Mammary epithelial cell (primary cell): ENCODE measurements at regions of chrX and their contacts with region 1.

Region 1: GRCh38 chrX:131710431-131711045 is 166.7 kb downstream of the OR13H1 start:
- DNase-seq: no peak
- H3K4me3 ChIP-seq: no peak overlapping the region
- H3K27ac ChIP-seq: no peak overlapping the region
- H3K4me1 ChIP-seq: no peaks in the 10 kb centered on the region
- H3K27me3 ChIP-seq: no peaks in the 10 kb centered on the region
- CTCF ChIP-seq: no peak

Region 2: GRCh38 chrX:130179579-130180215 is 1530.8 kb before region 1 on chrX:
- CTCF ChIA-PET with region 1: no interaction called
- dilution Hi-C with region 1: no loop called
- in situ Hi-C with region 1: no loop called
- intact Hi-C with region 1: no loop called
- DNase-seq: no peak
- H3K4me3 ChIP-seq: no peak overlapping the region
- H3K27ac ChIP-seq: no peak overlapping the region
- H3K4me1 ChIP-seq: no peaks in the 10 kb centered on the region
- H3K27me3 ChIP-seq: no peaks in the 10 kb centered on the region
- CTCF ChIP-seq: no peak

Region 3: DNA sequence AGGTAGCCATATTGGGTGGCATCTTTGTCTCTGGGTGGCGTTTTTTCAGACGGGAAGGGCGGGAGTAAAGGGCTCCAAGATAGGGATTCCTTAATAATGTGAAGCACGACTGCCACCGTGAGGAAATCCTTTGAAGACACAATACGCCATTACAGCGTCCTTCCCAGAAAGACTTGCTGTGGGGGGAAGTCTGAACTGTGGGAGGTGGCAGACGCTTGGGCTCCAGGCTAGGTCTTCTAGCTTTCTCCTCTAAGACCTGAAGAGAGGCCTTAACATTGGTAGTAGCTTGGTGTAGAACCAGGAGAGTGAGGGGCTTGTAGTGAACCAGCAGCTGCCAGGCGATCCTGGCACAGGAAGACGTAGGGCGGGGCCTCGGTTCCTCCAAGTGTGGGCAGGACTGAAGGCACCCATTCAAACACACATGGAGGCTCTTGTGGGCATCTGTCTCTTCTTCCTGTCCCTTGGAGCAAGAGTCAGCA is 30.6 kb after region 1 on chrX:
- CTCF ChIA-PET with region 1: no interaction called
- dilution Hi-C with region 1: no loop called
- in situ Hi-C with region 1: no loop called
- intact Hi-C with region 1: loop called (anchors 1 kb)
- DNase-seq: peak; percentile 79
- H3K4me3 ChIP-seq: no peak overlapping the region
- H3K27ac ChIP-seq: no peak overlapping the region
- H3K4me1 ChIP-seq: no peaks in the 10 kb centered on the region
- H3K27me3 ChIP-seq: no peaks in the 10 kb centered on the region
- CTCF ChIP-seq: no peak

Region 4: DNA sequence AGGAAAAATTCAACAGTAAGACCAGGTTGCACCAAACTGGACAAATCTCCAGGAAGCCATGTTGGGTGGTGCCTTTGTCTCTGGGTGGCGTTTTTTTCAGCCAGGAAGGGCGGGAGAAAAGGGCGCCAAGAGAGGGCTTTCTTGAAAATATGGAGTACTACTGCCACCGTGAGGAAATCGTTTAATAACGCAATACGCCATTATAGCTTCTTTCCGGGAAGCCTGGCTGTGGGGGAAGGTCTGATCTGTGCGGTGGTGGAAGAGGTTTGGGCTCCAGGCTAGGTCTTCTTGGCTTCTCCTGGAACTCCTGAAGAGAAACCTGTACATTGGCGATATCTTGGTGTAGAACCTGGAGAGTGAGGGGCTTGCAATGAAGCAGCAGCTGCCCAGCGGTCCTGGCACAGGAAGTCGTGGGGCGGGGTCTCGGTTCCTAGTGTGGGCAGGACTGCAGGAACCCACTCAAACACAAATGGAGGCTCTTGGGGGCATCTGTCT is 36.0 kb after region 1 on chrX:
- CTCF ChIA-PET with region 1: no interaction called
- dilution Hi-C with region 1: no loop called
- in situ Hi-C with region 1: no loop called
- intact Hi-C with region 1: loop called (anchors 1 kb)
- DNase-seq: peak; percentile 79
- H3K4me3 ChIP-seq: peak overlapping the region; percentile 54 to 66 (median 57)
- H3K27ac ChIP-seq: peak overlapping the region; percentile 57
- H3K4me1 ChIP-seq: no peaks in the 10 kb centered on the region
- H3K27me3 ChIP-seq: no peaks in the 10 kb centered on the region
- CTCF ChIP-seq: peak; percentile 22 to 45

Region 5: DNA sequence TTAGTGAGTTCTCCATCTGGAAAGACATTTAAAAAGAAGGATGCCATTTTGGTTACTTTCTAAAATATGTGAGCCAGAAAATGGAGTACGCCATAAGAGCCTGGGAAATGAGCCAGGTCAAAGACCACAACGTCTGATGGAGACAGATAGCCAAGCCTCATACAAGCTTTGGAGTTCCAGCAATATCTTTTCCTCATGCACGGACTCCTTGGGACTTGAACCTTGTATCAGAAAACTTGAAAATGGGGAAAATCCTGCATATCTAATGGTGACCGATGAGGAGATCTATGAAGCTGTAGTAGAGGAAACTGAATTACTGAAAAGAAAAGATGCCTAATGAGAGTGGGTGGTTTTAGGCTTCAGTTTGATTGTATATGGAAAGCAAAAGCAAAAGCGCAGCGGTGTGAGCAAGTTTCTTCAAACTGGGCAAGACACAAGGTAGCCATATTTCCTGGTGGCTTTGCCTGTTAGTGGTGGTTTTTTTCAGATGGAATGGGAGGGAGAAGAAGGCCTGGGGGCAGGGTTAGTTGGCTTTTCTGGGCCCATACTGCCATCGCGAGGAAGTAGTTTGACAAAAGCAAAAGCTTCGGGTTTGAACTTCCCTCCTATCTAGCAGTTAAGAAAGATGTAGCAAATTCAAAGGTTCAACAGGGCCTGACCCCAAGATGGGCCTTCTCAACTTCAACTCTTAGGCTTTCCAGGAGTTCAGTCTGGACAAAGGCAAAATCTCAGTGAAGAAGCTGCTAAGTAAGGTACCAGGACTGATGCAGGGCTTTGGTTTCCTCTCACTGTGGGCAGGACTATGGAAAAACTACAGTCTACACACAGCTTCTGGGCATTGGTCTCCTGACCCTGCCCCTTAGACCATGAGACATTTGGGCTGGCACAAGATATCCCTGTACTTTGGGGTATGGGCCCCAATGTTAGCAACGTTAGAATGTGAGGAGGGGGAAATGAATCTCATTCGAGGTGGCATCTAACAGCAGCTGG is 102.6 kb after region 1 on chrX:
- CTCF ChIA-PET with region 1: no interaction called
- dilution Hi-C with region 1: no loop called
- in situ Hi-C with region 1: loop called in 1 of 2 experiments (anchors 10 kb)
- intact Hi-C with region 1: loop called (anchors 1 kb)
- DNase-seq: peak; percentile 79
- H3K4me3 ChIP-seq: peak overlapping the region; percentile 24 to 43 (median 39)
- H3K27ac ChIP-seq: no peak overlapping the region
- H3K4me1 ChIP-seq: no peaks in the 10 kb centered on the region
- H3K27me3 ChIP-seq: no peaks in the 10 kb centered on the region
- CTCF ChIP-seq: peak; percentile 18 to 49

Region 6: GRCh38 chrX:132041015-132041414 is 330.5 kb after region 1 on chrX:
- CTCF ChIA-PET with region 1: no interaction called
- dilution Hi-C with region 1: no loop called
- in situ Hi-C with region 1: no loop called
- intact Hi-C with region 1: no loop called
- DNase-seq: peak; percentile 49
- H3K4me3 ChIP-seq: no peak overlapping the region
- H3K27ac ChIP-seq: no peak overlapping the region
- H3K4me1 ChIP-seq: peaks cover 3% of the 10 kb centered on the region
- H3K27me3 ChIP-seq: no peaks in the 10 kb centered on the region
- CTCF ChIP-seq: no peak